CD14-positive monocyte (primary cell): ENCODE measurements at regions of chr5 and their contacts with region 1.

Region 1: GRCh38 chr5:172133359-172134029 is 54.5 kb downstream of the STK10 start:
- DNase-seq: peak; percentile 99 to 100 (median 100)
- H3K4me3 ChIP-seq: peak overlapping the region in 1 of 3 experiments; percentile 32
- H3K4me3 Mint-ChIP-seq: peak overlapping the region; percentile 27 to 65
- H3K27ac ChIP-seq: peak overlapping the region; percentile 99
- H3K27ac Mint-ChIP-seq: peak overlapping the region; percentile 99 to 100 (median 100)
- H3K4me1 ChIP-seq: peaks cover 68 to 72% of the 10 kb centered on the region in 2 donors
- H3K4me1 Mint-ChIP-seq: peaks cover 75% of the 10 kb centered on the region
- H3K27me3 ChIP-seq: no peaks in the 10 kb centered on the region
- H3K27me3 Mint-ChIP-seq: peaks cover 0 to 2% (median 0%) of the 10 kb centered on the region in 3 donors
- CTCF ChIP-seq: no peak

Region 2: DNA sequence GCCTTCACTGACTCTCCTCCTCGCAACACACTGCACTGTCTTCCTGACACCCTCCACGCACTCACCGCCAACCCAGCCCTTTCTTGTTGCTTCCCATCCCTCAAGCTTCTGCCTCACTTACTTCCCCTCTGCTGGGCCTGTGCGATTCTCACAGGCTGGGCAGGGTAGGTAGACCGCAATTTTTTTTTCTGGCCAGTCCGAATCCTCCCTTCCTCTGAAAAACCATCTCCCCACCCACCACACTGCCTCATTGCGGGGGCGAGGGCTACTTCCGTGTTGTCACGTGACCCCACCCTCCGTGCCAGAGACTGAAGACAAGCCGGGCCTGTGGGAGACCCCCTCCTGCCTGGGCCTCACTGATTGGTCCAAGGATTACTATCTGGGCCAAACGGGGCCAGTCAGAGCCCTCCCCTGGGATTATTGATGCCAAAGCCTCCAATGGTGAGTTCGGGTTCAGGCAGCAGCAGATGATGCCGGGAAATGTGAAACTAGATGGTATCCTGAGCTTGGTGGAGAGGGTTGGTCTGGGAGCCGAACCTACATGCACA is 18.5 kb before region 1 on chr5:
- intact Hi-C with region 1: loop called in 1 of 2 experiments (anchors 1 kb)
- DNase-seq: peak; percentile 85 to 97 (median 92)
- H3K4me3 ChIP-seq: peak overlapping the region in 1 of 3 experiments; percentile 41
- H3K4me3 Mint-ChIP-seq: peak overlapping the region; percentile 50 to 87
- H3K27ac ChIP-seq: peak overlapping the region; percentile 88 to 89
- H3K27ac Mint-ChIP-seq: peak overlapping the region; percentile 93 to 99 (median 97)
- H3K4me1 ChIP-seq: peaks cover 86 to 87% of the 10 kb centered on the region in 2 donors
- H3K4me1 Mint-ChIP-seq: peaks cover 82% of the 10 kb centered on the region
- H3K27me3 ChIP-seq: no peaks in the 10 kb centered on the region
- H3K27me3 Mint-ChIP-seq: no peaks in the 10 kb centered on the region
- CTCF ChIP-seq: no peak

Region 3: GRCh38 chr5:172150514-172151425 is 17.3 kb after region 1 on chr5:
- intact Hi-C with region 1: loop called (anchors 1 to 2 kb)
- DNase-seq: peak; percentile 96 to 98 (median 98)
- H3K4me3 ChIP-seq: peak overlapping the region in 1 of 3 experiments; percentile 51
- H3K4me3 Mint-ChIP-seq: peak overlapping the region; percentile 74 to 84
- H3K27ac ChIP-seq: peak overlapping the region; percentile 85 to 86
- H3K27ac Mint-ChIP-seq: peak overlapping the region; percentile 97 to 99 (median 99)
- H3K4me1 ChIP-seq: peaks cover 64 to 70% of the 10 kb centered on the region in 2 donors
- H3K4me1 Mint-ChIP-seq: peaks cover 69% of the 10 kb centered on the region
- H3K27me3 ChIP-seq: no peaks in the 10 kb centered on the region
- H3K27me3 Mint-ChIP-seq: peaks cover 0 to 2% (median 2%) of the 10 kb centered on the region in 3 donors
- CTCF ChIP-seq: no peak

Region 4: GRCh38 chr5:172179361-172179989 is 46.0 kb after region 1 on chr5:
- intact Hi-C with region 1: loop called in 1 of 2 experiments (anchors 2 kb)
- DNase-seq: peak; percentile 72 to 90 (median 74)
- H3K4me3 ChIP-seq: peak overlapping the region; percentile 18 to 88 (median 20)
- H3K4me3 Mint-ChIP-seq: peak overlapping the region; percentile 80 to 87
- H3K27ac ChIP-seq: peak overlapping the region; percentile 92 to 93
- H3K27ac Mint-ChIP-seq: peak overlapping the region; percentile 96 to 98 (median 97)
- H3K4me1 ChIP-seq: peaks cover 87 to 100% of the 10 kb centered on the region in 2 donors
- H3K4me1 Mint-ChIP-seq: peaks cover 94% of the 10 kb centered on the region
- H3K27me3 ChIP-seq: no peaks in the 10 kb centered on the region
- H3K27me3 Mint-ChIP-seq: peaks cover 0 to 8% (median 0%) of the 10 kb centered on the region in 3 donors
- CTCF ChIP-seq: no peak

Region 5: GRCh38 chr5:172188033-172188892 is 54.8 kb after region 1 on chr5 and contains the start of gene STK10:
- intact Hi-C with region 1: loop called in 1 of 2 experiments (anchors 5 kb)
- DNase-seq: peak; percentile 82 to 91 (median 90)
- H3K4me3 ChIP-seq: peak within 1 kb of the TSS; percentile 84 to 97 (median 85)
- H3K4me3 Mint-ChIP-seq: peak within 1 kb of the TSS; percentile 99 to 100
- H3K27ac ChIP-seq: peak within 1 kb of the TSS; percentile 97
- H3K27ac Mint-ChIP-seq: peak within 1 kb of the TSS; percentile 95 to 100 (median 99)
- H3K4me1 ChIP-seq: peaks cover 34 to 38% of the 10 kb centered on the region in 2 donors
- H3K4me1 Mint-ChIP-seq: peaks cover 29% of the 10 kb centered on the region
- H3K27me3 ChIP-seq: no peaks in the 10 kb centered on the region
- H3K27me3 Mint-ChIP-seq: peaks cover 0 to 5% (median 1%) of the 10 kb centered on the region in 3 donors
- CTCF ChIP-seq: peak; percentile 92
- polyA plus RNA-seq, gene STK10: 21.5 to 180 (median 47.4) TPM